SK-N-SH (cell line): ENCODE measurements at regions of chr19 and their contacts with region 1.

Region 1: GRCh38 chr19:7618771-7619514 is 10.4 kb downstream of the XAB2 start:
- DNase-seq: peak; percentile 87
- H3K4me3 ChIP-seq: no peak overlapping the region
- H3K27ac ChIP-seq: peak overlapping the region in 1 of 2 experiments; percentile 98; a peak in 2 of 4 replicates
- H3K4me1 ChIP-seq: peaks cover 0 to 42% of the 10 kb centered on the region in 2 experiments; a peak in 1 of 4 replicates
- H3K27me3 ChIP-seq: no peaks in the 10 kb centered on the region
- CTCF ChIP-seq: no peak
- EP300 ChIP-seq: peak in 1 of 2 experiments; percentile 51; a peak in 2 of 4 replicates
- RAD21 ChIP-seq: no peak

Region 2: DNA sequence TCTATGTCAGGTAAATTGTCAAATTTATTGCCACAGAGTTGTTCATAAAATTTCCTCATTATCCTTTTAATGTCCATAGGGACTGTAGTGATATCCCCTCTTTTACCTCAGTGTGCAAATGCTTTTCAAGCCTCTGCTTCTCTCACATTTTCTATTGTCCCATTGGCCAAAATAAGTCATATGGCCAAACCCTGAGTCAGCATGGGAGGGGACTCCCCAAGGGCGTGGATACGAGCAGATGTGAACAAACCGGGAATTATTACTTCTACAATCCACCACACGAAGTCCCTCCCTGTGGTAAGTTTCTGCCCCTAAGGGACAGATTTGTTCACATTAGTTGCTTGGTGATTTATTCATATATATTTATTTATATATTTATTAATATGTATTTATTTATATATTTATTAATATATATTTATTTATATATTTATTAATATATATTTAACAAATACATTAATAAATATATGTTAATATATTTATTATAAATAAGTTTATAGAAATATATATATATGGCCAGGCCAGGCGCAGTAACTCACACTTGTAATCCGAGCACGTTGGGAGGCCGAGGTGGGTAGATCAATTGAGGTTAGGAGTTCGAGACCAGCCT is 43.4 kb before region 1 on chr19:
- CTCF ChIA-PET with region 1: interaction called, 40 read pairs
- POLR2A ChIA-PET with region 1: no interaction called
- DNase-seq: no peak
- H3K4me3 ChIP-seq: no peak overlapping the region
- H3K27ac ChIP-seq: no peak overlapping the region
- H3K4me1 ChIP-seq: no peaks in the 10 kb centered on the region
- H3K27me3 ChIP-seq: peaks cover 42% of the 10 kb centered on the region
- CTCF ChIP-seq: no peak
- EP300 ChIP-seq: no peak
- RAD21 ChIP-seq: no peak

Region 3: DNA sequence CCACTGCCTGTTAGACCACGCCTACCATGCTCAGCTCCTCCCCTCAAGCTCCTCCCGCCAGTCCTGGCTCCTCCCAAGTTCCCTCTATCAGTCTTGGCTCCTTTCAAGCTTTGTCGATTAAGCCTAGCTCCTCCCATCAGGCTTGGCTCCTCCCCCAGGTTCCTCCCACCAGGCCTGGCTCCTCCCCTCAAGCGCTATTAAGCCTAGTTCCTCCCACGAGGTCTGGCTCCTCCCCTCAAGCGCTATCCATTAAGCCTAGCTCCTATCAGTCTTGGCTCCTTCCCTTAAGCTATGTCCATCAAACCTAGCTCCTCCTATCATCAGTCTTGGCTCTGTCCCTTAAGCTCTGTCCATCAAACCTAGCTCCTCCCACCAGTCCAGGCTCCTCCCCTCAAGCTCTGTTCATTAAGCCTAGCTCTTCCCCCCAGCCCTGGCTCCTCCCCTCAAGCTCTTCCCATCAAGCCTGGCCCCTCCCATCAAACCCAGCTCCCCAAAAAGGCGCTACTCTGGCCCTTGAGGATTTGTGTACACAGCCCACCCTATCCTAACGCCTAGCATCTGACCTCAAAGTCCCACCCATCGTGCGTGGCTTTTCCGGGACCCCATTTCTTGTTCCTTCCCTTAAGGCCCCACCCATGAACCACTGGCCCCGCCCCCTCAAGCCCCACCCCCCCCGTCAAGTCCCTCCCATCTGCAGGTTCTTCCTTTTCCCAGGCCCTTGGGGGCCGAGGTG is 13.3 kb before region 1 on chr19:
- CTCF ChIA-PET with region 1: interaction called, 5 read pairs
- POLR2A ChIA-PET with region 1: interaction called, 11 read pairs
- DNase-seq: peak; percentile 78
- H3K4me3 ChIP-seq: no peak overlapping the region
- H3K27ac ChIP-seq: no peak overlapping the region; a peak in 1 of 4 replicates
- H3K4me1 ChIP-seq: peaks cover 0 to 8% of the 10 kb centered on the region in 2 experiments; a peak in 1 of 4 replicates
- H3K27me3 ChIP-seq: no peaks in the 10 kb centered on the region
- CTCF ChIP-seq: no peak
- EP300 ChIP-seq: no peak
- RAD21 ChIP-seq: no peak

Region 4: DNA sequence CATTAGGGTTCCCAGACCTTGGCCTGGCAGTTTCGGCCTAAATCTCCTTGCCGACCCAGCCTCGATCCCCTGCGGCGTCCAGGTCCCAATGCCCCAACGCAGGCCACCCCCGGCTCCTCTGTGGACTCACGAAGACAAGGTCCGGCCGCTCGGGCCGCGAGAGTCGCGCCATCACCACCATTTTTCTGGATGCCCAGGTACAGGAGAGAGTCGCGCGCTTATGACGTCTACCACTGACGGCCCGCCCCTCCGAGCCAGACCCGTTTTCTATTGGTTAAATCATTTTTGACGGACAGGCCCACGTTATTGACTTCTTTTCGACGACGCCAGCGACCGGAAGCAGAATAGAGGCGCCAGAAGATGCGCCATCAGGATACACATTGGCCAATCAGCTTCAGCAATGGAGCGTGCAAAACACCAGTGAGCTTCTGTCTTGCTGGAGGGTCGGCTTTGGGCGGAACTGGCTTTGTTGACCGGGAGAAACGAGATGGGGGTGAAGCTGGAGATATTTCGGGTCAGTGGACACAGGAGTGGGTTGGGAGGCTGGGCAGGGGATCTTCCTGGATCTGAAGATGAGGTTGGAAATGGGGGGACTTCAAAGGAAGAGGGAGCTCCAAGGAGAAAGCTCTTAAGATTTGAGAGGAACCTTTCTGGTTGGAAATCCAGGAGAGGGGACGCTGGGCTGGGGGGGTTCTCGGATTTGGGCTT is 10.6 kb after region 1 on chr19 and contains the starts of genes PET100 and XAB2:
- CTCF ChIA-PET with region 1: interaction called, 10 read pairs
- POLR2A ChIA-PET with region 1: interaction called, 16 read pairs
- DNase-seq: peak; percentile 97
- H3K4me3 ChIP-seq: peak within 1 kb of the TSS; percentile 100
- H3K27ac ChIP-seq: peak within 1 kb of the TSS; percentile 51 to 73; a peak in 3 of 4 replicates
- H3K4me1 ChIP-seq: peaks cover 8 to 20% of the 10 kb centered on the region in 2 experiments; a peak in 2 of 4 replicates
- H3K27me3 ChIP-seq: no peaks in the 10 kb centered on the region; the same call in 1 of the 2 replicates
- CTCF ChIP-seq: no peak
- EP300 ChIP-seq: no peak
- RAD21 ChIP-seq: no peak
- polyA plus RNA-seq, gene PET100: 48.1 and 54.0 TPM in 2 replicates
- polyA plus RNA-seq, gene XAB2: 36.5 and 43.3 TPM in 2 replicates

Region 5: DNA sequence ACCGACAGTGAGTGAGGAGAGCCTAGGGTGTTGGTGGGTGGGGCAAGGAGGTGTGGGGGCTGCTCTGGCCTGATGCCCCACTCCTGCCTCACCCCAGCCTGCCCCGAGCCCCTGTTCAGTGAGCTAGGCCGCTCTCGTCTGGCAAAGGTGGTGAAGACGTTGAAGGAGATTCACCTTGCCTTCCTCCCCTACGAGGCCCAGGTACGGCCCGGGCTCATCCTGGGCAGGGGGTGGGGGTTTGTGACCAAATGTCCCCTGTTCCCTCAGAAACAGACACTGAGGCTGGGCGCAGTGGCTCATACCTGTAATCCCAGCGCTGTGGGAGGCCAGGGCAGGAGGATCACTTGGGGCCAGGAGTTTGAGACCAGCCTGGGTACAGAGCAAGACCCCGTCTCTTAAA is 21.9 kb after region 1 on chr19:
- CTCF ChIA-PET with region 1: no interaction called
- POLR2A ChIA-PET with region 1: no interaction called
- DNase-seq: no peak
- H3K4me3 ChIP-seq: no peak overlapping the region
- H3K27ac ChIP-seq: no peak overlapping the region
- H3K4me1 ChIP-seq: peaks cover 0 to 4% of the 10 kb centered on the region in 2 experiments; a peak in 1 of 4 replicates
- H3K27me3 ChIP-seq: peaks cover 33% of the 10 kb centered on the region
- CTCF ChIP-seq: no peak
- EP300 ChIP-seq: no peak
- RAD21 ChIP-seq: no peak

Region 6: DNA sequence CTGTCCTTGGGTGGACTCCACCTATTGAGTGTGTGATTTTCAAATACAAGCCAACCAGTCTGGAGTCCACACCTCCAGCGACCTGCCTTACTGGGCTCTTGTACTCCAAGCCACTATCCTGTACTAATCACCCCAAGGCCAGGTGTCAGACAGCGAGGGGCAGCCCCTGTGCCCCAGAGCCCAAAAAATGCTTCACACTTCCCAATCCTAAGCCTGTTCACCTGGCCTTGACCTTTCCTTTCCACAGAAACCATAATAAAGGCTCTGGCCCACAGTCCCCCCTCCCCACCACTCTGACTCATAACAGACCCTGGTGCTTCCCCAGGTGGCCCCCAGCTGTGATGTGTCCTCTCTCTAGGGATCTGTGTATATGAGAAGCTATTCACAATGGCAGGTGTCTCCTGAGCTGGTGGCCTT is 124.5 kb after region 1 on chr19:
- CTCF ChIA-PET with region 1: no interaction called
- POLR2A ChIA-PET with region 1: no interaction called
- DNase-seq: no peak
- H3K4me3 ChIP-seq: no peak overlapping the region
- H3K27ac ChIP-seq: no peak overlapping the region
- H3K4me1 ChIP-seq: no peaks in the 10 kb centered on the region
- H3K27me3 ChIP-seq: peaks cover 45% of the 10 kb centered on the region
- CTCF ChIP-seq: no peak
- EP300 ChIP-seq: no peak
- RAD21 ChIP-seq: no peak